ENCODE measurements at regions of chr3 and their contacts with region 1.

Region 1: GRCh38 chr3:73624821-73625665 is at the start of gene PDZRN3:
- DNase-seq: peak; percentile 84 to 90 (median 86)
- H3K4me3 ChIP-seq: peak within 1 kb of the TSS; percentile 76
- H3K27ac ChIP-seq: peak within 1 kb of the TSS; percentile 48 to 85
- H3K4me1 ChIP-seq: peaks cover 4% of the 10 kb centered on the region
- H3K27me3 ChIP-seq: no peaks in the 10 kb centered on the region
- CTCF ChIP-seq: no peak
- EP300 ChIP-seq: no peak
- POLR2A ChIP-seq: peak; percentile 83
- total RNA-seq, gene PDZRN3: 68.1 to 161 (median 112) TPM

Region 2: DNA sequence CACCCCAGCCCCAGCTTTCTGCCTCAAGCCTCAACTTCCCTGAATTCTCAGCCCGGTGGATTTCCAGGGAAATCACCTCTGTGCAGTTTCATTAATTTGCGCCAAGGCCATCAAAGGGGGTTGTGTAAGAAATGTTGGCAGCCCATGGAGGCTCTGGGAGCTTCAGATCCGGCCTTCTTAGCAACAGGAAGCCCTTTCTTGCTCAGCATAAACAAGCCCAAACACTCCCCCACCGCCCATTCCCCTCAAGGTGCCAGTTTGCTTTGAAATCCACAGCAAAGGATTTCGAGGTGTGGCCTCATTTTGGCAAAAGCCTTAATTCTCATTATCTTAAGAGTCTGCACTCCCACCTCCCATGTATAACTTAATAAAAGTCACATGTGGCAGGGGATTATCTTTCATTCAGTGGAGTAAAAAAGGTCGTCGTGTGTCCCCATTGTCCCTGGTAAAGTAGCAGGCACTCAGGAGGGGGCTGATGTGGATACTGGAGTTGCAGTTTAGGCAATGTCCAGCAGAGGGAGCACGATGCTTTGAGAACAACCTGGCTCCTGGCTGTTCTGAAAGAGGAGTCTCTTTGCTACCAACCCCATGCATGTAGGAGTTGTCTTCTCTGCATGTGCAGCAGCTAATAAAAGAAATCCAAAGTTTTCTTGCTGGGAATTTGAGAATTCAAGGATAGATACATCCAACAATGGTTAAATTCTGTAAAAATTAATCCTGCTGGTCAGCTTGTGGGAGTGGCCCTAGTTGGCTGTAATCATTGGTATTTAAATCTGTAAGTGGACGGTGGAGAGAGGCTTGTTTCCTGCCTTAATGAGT is 524.1 kb before region 1 on chr3:
- intact Hi-C with region 1: loop called in 1 of 4 experiments (anchors 10 kb)
- DNase-seq: peak; percentile 82 to 92 (median 84)
- H3K4me3 ChIP-seq: no peak overlapping the region
- H3K27ac ChIP-seq: no peak overlapping the region
- H3K4me1 ChIP-seq: peaks cover 2% of the 10 kb centered on the region
- H3K27me3 ChIP-seq: no peaks in the 10 kb centered on the region
- CTCF ChIP-seq: peak; percentile 63 to 94 (median 92)
- EP300 ChIP-seq: no peak
- POLR2A ChIP-seq: no peak

Region 3: DNA sequence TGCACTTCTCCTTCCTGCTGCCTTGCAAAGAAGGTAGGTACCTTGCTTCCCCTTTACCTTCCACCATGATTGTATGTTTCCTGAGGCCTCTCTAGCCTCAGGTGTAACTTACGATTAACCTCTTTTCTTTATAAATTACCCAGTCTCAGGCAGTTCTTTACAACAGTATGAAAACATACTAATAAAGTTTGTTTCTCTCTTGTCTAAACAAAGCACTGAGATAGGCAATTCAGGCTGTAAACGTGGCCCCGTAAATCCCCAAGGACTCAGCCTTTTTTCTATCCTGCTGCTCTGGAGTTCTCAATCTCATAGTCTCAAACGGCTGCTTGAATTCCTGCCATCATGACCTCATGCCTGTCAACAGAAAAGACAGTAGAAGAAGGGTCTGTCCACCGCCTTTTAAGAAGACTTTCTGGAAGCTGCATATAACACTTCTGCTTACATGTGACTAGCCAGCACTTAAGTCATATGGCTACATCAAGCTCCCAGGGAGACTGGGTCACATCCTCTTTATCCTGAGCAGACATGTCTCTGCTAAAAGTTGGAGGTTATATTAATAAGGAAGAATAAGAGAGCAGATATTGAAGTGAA is 305.8 kb before region 1 on chr3:
- intact Hi-C with region 1: no loop called
- DNase-seq: no peak
- H3K4me3 ChIP-seq: no peak overlapping the region
- H3K27ac ChIP-seq: no peak overlapping the region
- H3K4me1 ChIP-seq: no peaks in the 10 kb centered on the region
- H3K27me3 ChIP-seq: no peaks in the 10 kb centered on the region
- CTCF ChIP-seq: no peak
- EP300 ChIP-seq: no peak
- POLR2A ChIP-seq: no peak

Region 4: DNA sequence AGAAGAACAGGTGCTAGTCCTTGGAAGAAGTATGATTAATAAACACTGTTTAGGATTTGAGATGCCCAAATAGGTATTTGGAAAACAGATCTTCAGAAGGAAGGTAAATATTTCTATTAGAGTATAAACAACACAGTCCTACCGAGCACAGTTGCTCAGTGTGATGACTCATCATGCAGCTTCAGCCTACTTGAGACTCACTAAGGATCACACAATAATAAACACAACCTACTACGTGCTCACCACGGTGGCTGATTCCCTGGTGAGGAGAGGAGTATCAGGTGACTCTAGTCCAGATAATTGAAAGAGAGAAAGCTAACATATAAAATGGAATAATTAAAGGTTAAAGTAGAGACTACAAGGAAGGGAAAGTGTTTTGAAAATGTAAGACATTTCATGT is 72.3 kb before region 1 on chr3:
- intact Hi-C with region 1: loop called in 1 of 4 experiments (anchors 10 kb)
- DNase-seq: no peak
- H3K4me3 ChIP-seq: no peak overlapping the region
- H3K27ac ChIP-seq: no peak overlapping the region
- H3K4me1 ChIP-seq: peaks cover 18% of the 10 kb centered on the region
- H3K27me3 ChIP-seq: no peaks in the 10 kb centered on the region
- CTCF ChIP-seq: no peak
- EP300 ChIP-seq: no peak
- POLR2A ChIP-seq: no peak

Region 5: DNA sequence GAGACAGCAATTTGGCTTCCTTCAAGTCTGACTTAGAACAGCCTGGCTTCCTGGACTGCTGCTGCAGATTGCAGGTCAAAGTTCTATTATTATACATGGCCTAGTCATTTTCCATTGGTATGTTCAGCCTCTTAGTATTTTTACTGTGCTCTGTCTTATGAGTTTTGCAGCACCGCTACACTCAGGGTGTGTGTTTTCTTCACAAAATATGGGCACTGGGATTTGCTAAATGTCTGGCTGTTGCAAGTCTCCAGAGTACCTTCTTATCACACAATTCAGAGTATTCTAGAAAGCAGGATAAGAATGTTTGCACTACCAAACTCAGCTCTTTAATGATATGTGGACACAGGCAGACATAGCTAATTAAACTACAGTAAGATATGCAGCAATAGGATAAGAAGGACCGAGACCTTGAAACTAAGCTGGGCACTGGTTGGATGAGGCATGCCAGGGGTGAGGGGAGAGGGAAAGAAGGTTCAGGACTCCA is 202.7 kb after region 1 on chr3:
- intact Hi-C with region 1: loop called in 1 of 4 experiments (anchors 5 kb)
- DNase-seq: no peak
- H3K4me3 ChIP-seq: no peak overlapping the region
- H3K27ac ChIP-seq: peak overlapping the region in 1 of 2 donors; percentile 52
- H3K4me1 ChIP-seq: peaks cover 7% of the 10 kb centered on the region
- H3K27me3 ChIP-seq: no peaks in the 10 kb centered on the region
- CTCF ChIP-seq: no peak
- EP300 ChIP-seq: no peak
- POLR2A ChIP-seq: no peak

Region 6: DNA sequence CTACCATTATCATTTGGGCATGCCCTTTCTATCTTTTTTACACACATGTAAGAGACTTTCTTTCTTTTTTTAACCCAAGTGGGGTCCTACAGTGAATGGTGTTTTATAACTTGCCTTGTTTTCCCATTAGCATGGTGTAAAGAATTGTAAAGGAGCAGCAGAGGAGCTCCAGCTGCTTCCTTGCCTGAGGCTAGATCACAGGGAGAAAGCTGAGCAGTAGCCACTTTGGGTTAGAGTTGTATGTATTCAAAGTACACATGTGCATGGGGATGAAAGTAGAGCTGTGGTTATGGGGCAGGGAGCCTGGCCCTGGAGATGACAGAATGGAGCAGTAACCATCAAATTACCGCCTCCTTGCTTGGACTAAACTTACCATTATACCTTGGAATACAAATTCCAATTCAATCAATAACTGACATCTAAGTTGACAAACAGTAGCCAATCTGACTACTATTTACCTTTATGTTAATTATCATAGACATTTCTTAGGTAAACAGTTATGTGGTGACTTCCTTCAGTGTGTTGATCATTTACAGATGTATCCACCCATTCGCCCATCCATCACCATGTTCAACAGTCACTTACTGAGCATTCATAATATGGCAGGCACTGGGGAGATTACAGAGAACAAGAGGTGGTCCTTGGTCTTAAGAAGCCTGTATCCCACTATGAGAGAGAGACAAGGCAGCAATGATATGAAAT is 230.9 kb after region 1 on chr3:
- intact Hi-C with region 1: loop called in 1 of 4 experiments (anchors 10 kb)
- DNase-seq: no peak
- H3K4me3 ChIP-seq: no peak overlapping the region
- H3K27ac ChIP-seq: no peak overlapping the region
- H3K4me1 ChIP-seq: no peaks in the 10 kb centered on the region
- H3K27me3 ChIP-seq: no peaks in the 10 kb centered on the region
- CTCF ChIP-seq: no peak
- EP300 ChIP-seq: no peak
- POLR2A ChIP-seq: no peak

Measured in ovary (tissue), 10 donors.